Activated CD8-positive, alpha-beta T cell treated with anti-CD3 and anti-CD28 coated beads for 36 hours (primary cell): ENCODE measurements at regions of chr14 and their contacts with region 1.

Region 1: GRCh38 chr14:51996148-51996746 is 6.9 kb downstream of the RTRAF start:
- DNase-seq: peak; percentile 15
- ATAC-seq: no peak
- H3K4me3 Mint-ChIP-seq: no peak overlapping the region
- H3K27ac Mint-ChIP-seq: no peak overlapping the region
- H3K4me1 Mint-ChIP-seq: peaks cover 34% of the 10 kb centered on the region
- H3K27me3 Mint-ChIP-seq: no peaks in the 10 kb centered on the region
- CTCF ChIP-seq: peak; percentile 85

Region 2: DNA sequence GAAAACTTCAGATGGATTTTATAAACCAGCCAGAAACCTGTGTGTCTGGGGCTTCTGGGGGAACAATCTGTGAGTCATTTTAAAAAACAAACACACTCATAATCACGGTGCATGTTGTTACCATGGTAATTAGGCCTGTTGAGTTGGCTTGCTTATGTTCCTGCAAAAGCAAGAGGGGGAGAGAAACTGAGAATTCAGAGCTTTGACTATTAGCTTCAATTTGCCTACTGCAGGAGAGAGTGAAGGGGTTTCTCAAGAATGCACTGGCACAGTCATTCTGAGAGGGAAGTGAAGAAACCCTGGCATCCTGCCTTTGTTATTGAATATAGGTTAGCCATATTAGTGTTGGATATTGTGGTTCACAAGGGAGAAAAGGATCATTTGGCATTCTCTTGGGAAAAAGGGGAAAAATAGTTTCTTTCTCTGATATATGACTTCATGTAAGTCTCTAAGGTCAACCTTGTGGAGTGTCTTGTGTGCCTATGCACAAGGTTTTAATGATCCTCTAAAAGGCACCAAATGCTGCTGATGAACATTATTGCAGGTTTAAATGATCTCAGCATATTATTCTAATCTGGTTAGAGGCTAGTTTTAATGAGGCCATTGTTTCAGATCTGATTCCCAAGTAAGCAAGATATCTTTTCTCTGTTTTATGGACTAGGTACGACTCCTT is 122.9 kb before region 1 on chr14:
- CTCF ChIA-PET with region 1: no interaction called
- POLR2A ChIA-PET with region 1: no interaction called
- intact Hi-C with region 1: no loop called
- DNase-seq: peak; percentile 70
- ATAC-seq: peak; percentile 79
- H3K4me3 Mint-ChIP-seq: peak overlapping the region; percentile 30
- H3K27ac Mint-ChIP-seq: peak overlapping the region; percentile 91
- H3K4me1 Mint-ChIP-seq: peaks cover 66% of the 10 kb centered on the region
- H3K27me3 Mint-ChIP-seq: no peaks in the 10 kb centered on the region
- CTCF ChIP-seq: no peak

Region 3: DNA sequence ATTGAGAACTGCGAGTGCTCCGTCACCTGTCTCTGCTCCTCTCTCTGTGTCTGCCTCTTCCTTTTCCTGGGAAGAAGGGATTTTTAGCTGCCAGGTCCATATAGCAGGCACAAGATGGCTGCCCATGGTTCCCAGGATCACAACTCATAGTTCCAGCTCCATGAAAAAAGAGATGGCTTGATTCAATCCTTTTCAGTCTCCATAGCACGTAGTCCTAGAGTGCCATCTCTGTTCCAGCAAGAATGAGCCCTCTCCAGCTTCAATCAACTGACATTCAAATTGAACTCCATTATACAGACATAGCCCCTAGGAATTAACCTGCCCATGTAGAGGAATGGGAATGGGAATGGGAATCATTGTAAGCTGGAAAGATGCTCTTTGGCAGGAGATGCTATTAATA is 41.6 kb before region 1 on chr14:
- CTCF ChIA-PET with region 1: no interaction called
- POLR2A ChIA-PET with region 1: no interaction called
- intact Hi-C with region 1: no loop called
- DNase-seq: no peak
- ATAC-seq: no peak
- H3K4me3 Mint-ChIP-seq: no peak overlapping the region
- H3K27ac Mint-ChIP-seq: peak overlapping the region; percentile 9
- H3K4me1 Mint-ChIP-seq: peaks cover 18% of the 10 kb centered on the region
- H3K27me3 Mint-ChIP-seq: no peaks in the 10 kb centered on the region
- CTCF ChIP-seq: no peak

Region 4: DNA sequence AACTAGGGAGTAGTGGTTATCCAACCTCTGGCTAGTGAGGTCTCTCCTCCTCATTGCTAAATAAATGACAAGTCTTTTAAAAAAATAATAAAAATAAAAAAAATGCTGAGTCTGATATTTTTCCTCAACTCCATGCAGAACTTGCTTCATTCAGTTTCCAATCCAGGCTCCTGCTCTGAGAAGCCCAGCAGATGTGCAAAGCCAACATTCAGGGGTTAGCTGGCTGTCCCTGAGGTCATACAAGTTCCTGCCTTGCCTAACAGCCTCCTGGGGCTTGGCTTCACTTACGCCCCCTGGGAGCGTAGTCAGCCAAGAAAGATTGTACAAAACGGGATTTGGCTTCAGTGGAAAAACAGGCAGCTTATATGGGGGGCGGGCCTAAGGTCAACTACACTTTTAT is 16.4 kb after region 1 on chr14:
- CTCF ChIA-PET with region 1: interaction called, 34 read pairs
- POLR2A ChIA-PET with region 1: interaction called, 3 read pairs
- intact Hi-C with region 1: no loop called
- DNase-seq: no peak
- ATAC-seq: no peak
- H3K4me3 Mint-ChIP-seq: no peak overlapping the region
- H3K27ac Mint-ChIP-seq: no peak overlapping the region
- H3K4me1 Mint-ChIP-seq: no peaks in the 10 kb centered on the region
- H3K27me3 Mint-ChIP-seq: peaks cover 5% of the 10 kb centered on the region
- CTCF ChIP-seq: no peak

Region 5: GRCh38 chr14:52131640-52132320 is 135.5 kb after region 1 on chr14:
- CTCF ChIA-PET with region 1: interaction called, 36 read pairs
- POLR2A ChIA-PET with region 1: no interaction called
- intact Hi-C with region 1: loop called (anchors 5 kb)
- DNase-seq: peak; percentile 68
- ATAC-seq: peak; percentile 74
- H3K4me3 Mint-ChIP-seq: no peak overlapping the region
- H3K27ac Mint-ChIP-seq: no peak overlapping the region
- H3K4me1 Mint-ChIP-seq: peaks cover 8% of the 10 kb centered on the region
- H3K27me3 Mint-ChIP-seq: peaks cover 1% of the 10 kb centered on the region
- CTCF ChIP-seq: peak; percentile 71

Region 6: GRCh38 chr14:52166822-52167221 is 170.6 kb after region 1 on chr14:
- CTCF ChIA-PET with region 1: no interaction called
- POLR2A ChIA-PET with region 1: no interaction called
- intact Hi-C with region 1: no loop called
- DNase-seq: no peak
- ATAC-seq: no peak
- H3K4me3 Mint-ChIP-seq: no peak overlapping the region
- H3K27ac Mint-ChIP-seq: no peak overlapping the region
- H3K4me1 Mint-ChIP-seq: no peaks in the 10 kb centered on the region
- H3K27me3 Mint-ChIP-seq: no peaks in the 10 kb centered on the region
- CTCF ChIP-seq: no peak

Region 7: DNA sequence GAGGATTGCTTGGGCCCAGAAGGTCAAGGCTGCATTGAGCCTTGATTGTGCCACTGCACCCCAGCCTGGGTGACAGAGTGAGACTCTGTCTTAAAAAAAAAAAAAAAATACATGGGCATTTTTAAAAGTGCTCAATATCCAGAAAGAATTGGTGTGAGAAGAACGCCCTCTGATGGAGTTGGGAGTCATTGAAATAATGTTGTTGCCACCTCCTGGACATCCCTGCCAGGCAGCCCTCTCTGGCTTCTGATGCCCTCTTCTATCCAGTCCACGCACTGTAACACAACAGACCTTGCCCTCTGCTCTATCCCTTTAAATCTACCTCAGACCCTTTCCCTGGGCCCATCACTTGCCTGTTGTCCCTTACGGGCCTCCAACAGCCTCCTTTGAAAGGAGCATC is 276.1 kb after region 1 on chr14:
- CTCF ChIA-PET with region 1: interaction called, 12 read pairs
- POLR2A ChIA-PET with region 1: no interaction called
- intact Hi-C with region 1: no loop called
- DNase-seq: peak; percentile 52
- ATAC-seq: peak; percentile 53
- H3K4me3 Mint-ChIP-seq: no peak overlapping the region
- H3K27ac Mint-ChIP-seq: peak overlapping the region; percentile 52
- H3K4me1 Mint-ChIP-seq: peaks cover 21% of the 10 kb centered on the region
- H3K27me3 Mint-ChIP-seq: peaks cover 19% of the 10 kb centered on the region
- CTCF ChIP-seq: peak; percentile 49